Lower leg skin (tissue), 4 donors: ENCODE measurements at regions of chr10 and their contacts with region 1.

Region 1: DNA sequence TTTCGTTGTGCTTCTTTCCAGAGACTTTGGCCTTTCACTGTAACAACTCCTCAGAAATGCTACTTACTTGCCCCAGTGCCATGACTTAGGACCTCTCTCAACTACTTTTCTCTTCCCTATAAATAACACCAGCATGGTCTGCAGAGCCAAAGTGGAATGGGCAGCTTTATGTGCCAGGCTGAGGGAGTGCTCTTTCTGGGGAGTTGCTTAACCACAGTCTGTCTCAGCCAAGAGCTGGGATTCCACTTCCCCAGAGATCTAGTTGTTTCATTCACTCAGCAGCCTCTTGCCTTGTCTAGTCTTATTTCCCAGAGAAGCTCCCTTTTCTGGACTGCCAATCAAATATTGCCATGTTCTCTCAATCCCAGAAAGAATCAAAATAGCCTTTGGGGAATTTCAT is 912.2 kb downstream of the GRID1 start:
- DNase-seq: no peak
- H3K4me3 ChIP-seq: no peak overlapping the region
- CTCF ChIP-seq: no peak
- POLR2A ChIP-seq: no peak

Region 2: DNA sequence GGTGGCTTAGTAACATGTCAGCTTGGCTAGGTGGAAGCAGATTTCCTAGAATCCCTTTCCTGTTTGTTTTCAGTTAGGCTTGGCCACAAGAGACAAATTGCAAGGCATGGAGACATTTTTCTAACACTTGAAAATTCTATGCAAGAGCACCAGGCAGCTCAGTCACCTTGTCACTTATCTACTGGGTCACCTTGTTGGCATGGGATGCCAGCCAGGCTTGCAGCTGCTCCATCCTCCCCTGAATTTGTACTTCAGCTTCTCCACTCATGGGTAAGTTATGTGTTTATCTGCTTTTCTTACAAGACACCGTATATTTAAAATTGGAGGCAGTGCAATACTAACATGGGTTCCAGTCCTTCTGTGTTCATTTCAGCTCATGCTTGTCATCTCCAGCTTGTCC is 1166.2 kb before region 1 on chr10:
- intact Hi-C with region 1: loop called (anchors 5 kb)
- DNase-seq: no peak
- H3K4me3 ChIP-seq: no peak overlapping the region
- CTCF ChIP-seq: no peak
- POLR2A ChIP-seq: no peak

Region 3: GRCh38 chr10:85702768-85703167 is 248.4 kb after region 1 on chr10:
- intact Hi-C with region 1: no loop called
- DNase-seq: no peak
- H3K4me3 ChIP-seq: no peak overlapping the region
- CTCF ChIP-seq: no peak
- POLR2A ChIP-seq: no peak

Region 4: DNA sequence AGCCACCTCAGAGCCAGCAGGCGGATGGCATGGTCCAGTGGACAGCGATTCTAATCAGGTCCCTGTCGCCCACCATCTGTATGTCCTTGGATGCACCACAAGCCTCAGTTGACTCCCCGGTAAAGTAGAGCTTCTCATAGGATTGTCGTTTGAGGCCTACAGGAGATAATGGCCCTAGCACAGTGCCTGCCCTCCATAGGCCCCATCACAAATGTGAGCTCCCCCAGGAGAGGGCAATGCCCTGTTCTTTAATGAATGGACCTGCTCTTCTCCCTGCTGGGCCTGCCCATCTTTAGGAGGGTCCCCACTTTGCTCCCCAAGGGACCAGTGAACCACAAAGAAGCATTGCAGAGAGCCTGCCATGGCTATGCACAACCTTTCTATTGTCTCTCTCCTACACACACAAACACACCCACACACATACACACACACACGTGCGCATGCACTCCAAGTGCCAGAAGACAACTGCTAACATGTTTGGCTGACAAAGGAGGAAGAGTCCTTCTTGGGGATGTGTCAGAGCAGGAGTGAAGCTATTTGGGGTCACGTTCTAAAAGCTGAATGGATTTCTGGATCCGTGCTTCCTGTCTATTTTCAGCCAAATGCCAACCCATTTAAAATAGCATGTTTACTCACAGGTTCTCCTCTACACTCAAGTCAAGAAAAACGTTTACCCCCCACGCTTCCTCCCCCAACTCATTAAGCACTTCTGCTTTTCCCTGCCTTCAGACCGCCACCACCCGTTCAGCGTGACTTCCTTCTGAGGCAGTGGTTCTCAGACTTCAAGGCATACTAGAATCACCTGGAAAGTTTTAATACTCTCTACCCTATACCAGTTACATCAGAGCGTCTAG is 716.1 kb after region 1 on chr10:
- intact Hi-C with region 1: no loop called
- DNase-seq: no peak
- H3K4me3 ChIP-seq: no peak overlapping the region
- CTCF ChIP-seq: no peak
- POLR2A ChIP-seq: no peak